Tibial artery (tissue), 4 donors: ENCODE measurements at regions of chr6 and their contacts with region 1.

Region 1: GRCh38 chr6:119129148-119129967 is 50.9 kb upstream of the FAM184A start:
- DNase-seq: no peak
- H3K4me3 ChIP-seq: no peak overlapping the region
- H3K27ac ChIP-seq: peak overlapping the region; percentile 56
- H3K4me1 ChIP-seq: peaks cover 0 to 36% (median 14%) of the 10 kb centered on the region in 4 donors
- H3K27me3 ChIP-seq: no peaks in the 10 kb centered on the region
- CTCF ChIP-seq: peak; percentile 76 to 84

Region 2: DNA sequence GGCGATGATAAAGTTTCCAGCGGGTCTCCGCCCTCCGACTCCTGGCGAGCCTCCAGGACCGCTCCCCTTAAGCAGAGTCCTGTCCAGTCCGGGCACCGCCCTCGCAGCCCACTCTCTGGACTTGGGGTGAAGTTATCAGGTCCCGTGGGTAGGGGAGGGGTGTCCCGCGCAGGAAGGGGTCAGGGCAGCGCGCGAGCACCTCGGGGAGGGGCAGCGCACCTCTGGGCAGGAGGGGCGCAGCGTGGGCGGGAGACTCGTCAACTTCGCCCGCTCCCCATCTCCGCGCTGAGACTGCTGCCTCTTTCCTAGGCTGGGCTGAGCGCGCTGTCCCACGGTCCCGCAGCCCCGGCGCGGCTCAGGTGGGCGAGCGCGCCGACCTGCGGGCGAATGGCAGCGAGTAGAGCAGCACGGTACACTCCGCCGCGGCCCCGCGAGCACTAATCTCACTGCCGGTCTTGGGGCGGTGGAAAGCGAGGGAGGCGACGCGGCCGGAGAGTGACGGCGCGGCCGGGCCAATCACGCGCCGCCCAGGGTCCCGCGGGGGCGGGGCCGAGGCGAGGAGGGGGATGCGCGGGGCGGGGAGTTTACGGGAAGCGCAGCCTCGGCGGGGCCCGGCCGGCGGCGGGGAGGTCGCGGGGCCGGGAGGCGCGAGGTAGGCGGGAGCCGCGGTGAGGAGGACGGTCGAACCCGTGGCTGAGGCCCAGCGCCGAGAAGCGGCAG is 220.1 kb after region 1 on chr6 and contains the start of gene MAN1A1:
- intact Hi-C with region 1: loop called (anchors 10 kb)
- DNase-seq: peak; percentile 91 to 96
- H3K4me3 ChIP-seq: peak within 1 kb of the TSS; percentile 73 to 91
- H3K27ac ChIP-seq: peak within 1 kb of the TSS; percentile 93 to 99
- H3K4me1 ChIP-seq: peaks cover 0 to 65% (median 13%) of the 10 kb centered on the region in 4 donors
- H3K27me3 ChIP-seq: no peaks in the 10 kb centered on the region
- CTCF ChIP-seq: no peak

Region 3: DNA sequence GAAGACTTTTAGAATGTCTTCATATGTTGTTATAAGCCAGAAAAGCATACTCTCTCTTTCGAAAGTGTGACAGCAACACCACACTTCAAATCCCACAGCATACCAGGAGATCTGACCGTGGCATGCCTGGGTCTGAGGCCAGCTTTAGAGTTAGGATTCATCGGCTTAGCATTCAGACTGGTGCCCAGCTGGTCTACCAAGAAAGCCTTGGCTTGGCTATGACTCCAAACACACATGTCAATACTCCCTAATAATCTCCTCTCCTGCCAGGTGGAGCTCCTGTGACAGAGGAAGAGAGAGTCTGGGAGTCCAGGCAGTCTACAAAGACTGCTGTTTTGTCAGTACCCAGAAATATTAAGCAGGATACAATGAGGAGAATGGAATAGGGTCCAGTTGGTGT is 297.3 kb after region 1 on chr6:
- intact Hi-C with region 1: no loop called
- DNase-seq: no peak
- H3K4me3 ChIP-seq: no peak overlapping the region
- H3K27ac ChIP-seq: no peak overlapping the region
- H3K4me1 ChIP-seq: no peaks in the 10 kb centered on the region
- H3K27me3 ChIP-seq: no peaks in the 10 kb centered on the region
- CTCF ChIP-seq: no peak